Gastrocnemius medialis (tissue), 4 donors: ENCODE measurements at regions of chr7 and their contacts with region 1.

Region 1: GRCh38 chr7:135662373-135663114 is at the start of gene STMP1:
- DNase-seq: peak; percentile 93 to 95
- ATAC-seq: peak; percentile 93 to 94
- H3K4me3 ChIP-seq: peak within 1 kb of the TSS; percentile 81 to 100 (median 90)
- H3K27ac ChIP-seq: peak within 1 kb of the TSS; percentile 91 to 99 (median 94)
- H3K4me1 ChIP-seq: peaks cover 35 to 47% of the 10 kb centered on the region in 2 donors
- H3K27me3 ChIP-seq: no peaks in the 10 kb centered on the region
- CTCF ChIP-seq: peak in 2 of 5 experiments; percentile 87 to 91
- POLR2A ChIP-seq: peak; percentile 90 to 93
- total RNA-seq, gene STMP1: 7.7 to 19.9 (median 11.8) TPM

Region 2: DNA sequence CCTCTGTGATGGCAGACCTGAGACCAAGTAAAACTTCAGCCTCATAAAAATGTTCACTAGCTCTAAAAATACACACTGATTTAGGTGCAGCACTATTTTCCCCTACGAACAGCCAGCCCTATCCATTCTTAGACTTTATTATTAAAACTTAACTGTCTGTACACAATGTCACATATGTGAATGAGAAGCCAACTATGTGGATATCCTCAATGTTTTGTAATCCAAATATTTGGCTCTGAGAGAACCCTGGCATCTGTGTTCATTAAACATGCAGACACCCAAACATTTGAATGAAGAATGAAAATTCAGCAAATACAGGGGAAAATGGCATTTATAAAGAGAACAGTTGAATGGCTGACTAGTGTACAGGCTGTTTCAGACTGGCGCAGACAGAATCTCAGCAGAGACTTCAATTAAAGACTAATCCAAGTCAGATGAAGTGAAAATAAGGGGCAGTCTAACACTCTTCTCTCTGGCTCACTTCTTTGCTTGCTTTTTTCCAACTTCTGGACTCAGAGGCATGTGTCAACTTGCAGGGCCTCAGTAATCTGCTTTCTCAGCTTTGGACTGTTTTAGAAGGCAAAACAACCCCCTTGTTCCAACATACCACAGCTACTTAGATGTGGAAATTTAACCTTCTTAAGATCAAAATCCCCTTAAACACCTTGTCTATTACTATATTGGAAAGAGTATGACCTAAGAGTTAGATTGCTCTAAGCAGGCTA is 133.5 kb after region 1 on chr7:
- in situ Hi-C with region 1: no loop called
- intact Hi-C with region 1: loop called (anchors 2 kb)
- DNase-seq: no peak
- ATAC-seq: no peak
- H3K4me3 ChIP-seq: no peak overlapping the region
- H3K27ac ChIP-seq: no peak overlapping the region
- H3K4me1 ChIP-seq: no peaks in the 10 kb centered on the region
- H3K27me3 ChIP-seq: no peaks in the 10 kb centered on the region
- CTCF ChIP-seq: no peak
- POLR2A ChIP-seq: no peak